ENCODE measurements at regions of chr19 and their contacts with region 1.

Region 1: DNA sequence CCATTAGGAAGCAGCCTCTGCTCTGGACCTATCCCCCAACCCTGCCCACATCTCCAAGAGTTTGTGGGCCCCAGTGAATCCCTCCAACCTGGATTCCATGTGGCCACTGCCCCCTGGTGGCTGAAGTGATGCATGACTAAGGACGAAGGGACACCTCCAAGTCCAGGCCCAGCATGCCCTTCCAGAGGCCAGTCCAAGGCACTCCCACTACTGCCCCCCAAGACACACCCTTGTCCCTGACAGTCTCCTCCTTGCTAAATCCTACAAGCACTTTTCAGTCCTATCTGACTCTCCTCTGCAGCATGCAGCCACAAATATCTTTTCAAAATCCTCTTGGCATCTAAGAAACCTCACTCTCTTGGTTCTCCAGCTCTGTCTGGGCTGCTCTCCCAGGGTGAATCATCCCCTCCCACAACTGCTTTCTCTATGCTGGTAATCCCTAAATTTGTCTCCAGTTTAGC is 33.0 kb downstream of the DEDD2 start:
- DNase-seq: peak; percentile 80
- CTCF ChIP-seq: peak; percentile 92

Region 2: GRCh38 chr19:42113641-42114348 is 70.6 kb before region 1 on chr19:
- CTCF ChIA-PET with region 1: interaction called, 80 read pairs
- POLR2A ChIA-PET with region 1: no interaction called
- DNase-seq: peak; percentile 62
- CTCF ChIP-seq: no peak

Measured in GM10248 (cell line).